H1 (cell line): ENCODE measurements at regions of chr1 and their contacts with region 1.

Region 1: GRCh38 chr1:41282679-41283317 is 40.7 kb upstream of the SCMH1 start:
- DNase-seq: peak; percentile 23 to 81
- H3K4me3 ChIP-seq: no peak overlapping the region
- H3K27ac ChIP-seq: no peak overlapping the region
- H3K4me1 ChIP-seq: peaks cover 8 to 15% (median 13%) of the 10 kb centered on the region in 4 experiments
- H3K27me3 ChIP-seq: no peaks in the 10 kb centered on the region; a peak in 2 of 7 replicates
- CTCF ChIP-seq: peak; percentile 78 to 94 (median 88)
- EP300 ChIP-seq: no peak
- POLR2A ChIP-seq: no peak
- RAD21 ChIP-seq: peak; percentile 83 to 84

Region 2: DNA sequence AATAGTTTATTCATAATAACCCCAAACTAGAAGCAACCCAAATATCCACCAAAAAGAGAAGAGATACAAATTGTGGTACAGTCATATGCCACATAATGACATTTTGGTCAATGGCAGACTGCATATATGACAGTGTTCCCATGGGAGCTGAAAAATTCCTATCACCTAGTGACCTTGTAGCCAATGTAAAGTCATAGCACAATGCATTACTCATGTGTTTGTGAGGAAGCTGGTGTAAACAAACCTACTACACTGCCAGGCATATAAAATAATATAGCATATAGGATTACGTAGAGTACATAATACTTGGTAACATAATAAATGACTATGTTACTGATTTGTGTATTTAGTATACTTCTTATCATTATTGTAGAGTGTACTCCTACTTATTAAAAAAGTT is 231.8 kb before region 1 on chr1:
- CTCF ChIA-PET with region 1: no interaction called
- POLR2A ChIA-PET with region 1: no interaction called
- DNase-seq: no peak
- H3K4me3 ChIP-seq: no peak overlapping the region
- H3K27ac ChIP-seq: no peak overlapping the region
- H3K4me1 ChIP-seq: no peaks in the 10 kb centered on the region
- H3K27me3 ChIP-seq: no peaks in the 10 kb centered on the region
- CTCF ChIP-seq: no peak
- EP300 ChIP-seq: no peak
- POLR2A ChIP-seq: no peak
- RAD21 ChIP-seq: no peak

Region 3: DNA sequence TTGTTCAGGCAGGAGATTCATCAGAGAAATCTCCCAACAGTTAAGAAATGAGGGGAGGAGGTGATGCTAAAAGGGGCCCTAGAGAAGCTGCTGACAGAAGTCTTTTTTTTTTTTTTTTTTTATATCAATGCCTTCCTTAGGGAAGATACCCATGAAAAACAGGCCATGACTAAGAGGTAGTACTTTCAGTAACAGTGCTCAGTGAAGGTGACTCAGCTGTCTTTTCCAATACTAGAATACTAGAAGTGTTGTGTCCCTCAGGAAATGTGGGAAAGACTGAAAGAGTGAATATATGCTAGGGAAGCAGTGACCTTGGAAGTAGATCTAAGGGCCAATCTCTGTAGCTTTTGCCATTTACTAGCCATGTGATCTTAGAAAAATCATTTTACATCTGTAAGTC is 208.8 kb before region 1 on chr1:
- CTCF ChIA-PET with region 1: no interaction called
- POLR2A ChIA-PET with region 1: no interaction called
- DNase-seq: no peak
- H3K4me3 ChIP-seq: no peak overlapping the region
- H3K27ac ChIP-seq: no peak overlapping the region
- H3K4me1 ChIP-seq: no peaks in the 10 kb centered on the region
- H3K27me3 ChIP-seq: no peaks in the 10 kb centered on the region
- CTCF ChIP-seq: no peak
- EP300 ChIP-seq: no peak
- POLR2A ChIP-seq: no peak
- RAD21 ChIP-seq: no peak

Region 4: DNA sequence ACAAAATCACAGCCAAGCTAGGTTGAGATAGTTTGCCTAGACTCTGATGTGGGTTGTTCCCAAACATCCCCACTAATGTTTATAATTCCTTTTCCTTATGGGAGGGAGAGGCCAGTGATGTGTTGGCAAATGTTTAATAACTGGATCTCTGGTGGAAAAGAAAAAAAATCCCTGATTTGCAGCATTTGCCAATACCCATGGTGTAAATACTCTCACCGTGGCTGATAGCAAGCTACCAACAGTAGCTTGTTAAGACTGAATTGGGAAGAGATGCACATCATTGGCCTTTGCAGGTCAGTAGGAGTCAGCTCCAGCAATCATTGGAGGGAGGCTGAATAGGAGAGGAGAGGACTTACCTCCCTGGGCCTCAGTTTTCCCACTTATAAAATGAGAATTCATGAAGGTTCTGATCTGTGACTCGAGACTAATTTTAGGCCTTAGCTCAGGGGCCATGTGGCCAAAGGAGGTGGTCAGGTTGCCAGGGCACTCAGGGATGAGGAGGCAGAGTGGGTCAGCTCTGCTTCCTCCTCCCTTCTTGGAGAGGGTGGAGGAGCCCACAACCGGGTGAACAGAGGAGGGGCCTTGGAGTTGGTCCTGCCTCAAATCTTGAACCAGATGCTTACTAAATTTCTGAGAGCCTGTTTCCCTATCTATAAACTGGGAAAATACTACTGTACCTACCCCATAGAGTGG is 20.7 kb before region 1 on chr1:
- CTCF ChIA-PET with region 1: interaction called, 23 read pairs
- POLR2A ChIA-PET with region 1: interaction called, 3 read pairs
- DNase-seq: no peak
- H3K4me3 ChIP-seq: no peak overlapping the region
- H3K27ac ChIP-seq: no peak overlapping the region
- H3K4me1 ChIP-seq: no peaks in the 10 kb centered on the region
- H3K27me3 ChIP-seq: no peaks in the 10 kb centered on the region
- CTCF ChIP-seq: no peak
- EP300 ChIP-seq: no peak
- POLR2A ChIP-seq: no peak
- RAD21 ChIP-seq: no peak

Region 5: GRCh38 chr1:41294216-41294615 is 11.4 kb after region 1 on chr1:
- CTCF ChIA-PET with region 1: interaction called, 43 read pairs
- POLR2A ChIA-PET with region 1: interaction called, 3 read pairs
- DNase-seq: no peak
- H3K4me3 ChIP-seq: no peak overlapping the region
- H3K27ac ChIP-seq: no peak overlapping the region
- H3K4me1 ChIP-seq: no peaks in the 10 kb centered on the region
- H3K27me3 ChIP-seq: peaks cover 0 to 2% (median 0%) of the 10 kb centered on the region in 4 experiments; a peak in 1 of 7 replicates
- CTCF ChIP-seq: no peak
- EP300 ChIP-seq: no peak
- POLR2A ChIP-seq: no peak
- RAD21 ChIP-seq: no peak

Region 6: DNA sequence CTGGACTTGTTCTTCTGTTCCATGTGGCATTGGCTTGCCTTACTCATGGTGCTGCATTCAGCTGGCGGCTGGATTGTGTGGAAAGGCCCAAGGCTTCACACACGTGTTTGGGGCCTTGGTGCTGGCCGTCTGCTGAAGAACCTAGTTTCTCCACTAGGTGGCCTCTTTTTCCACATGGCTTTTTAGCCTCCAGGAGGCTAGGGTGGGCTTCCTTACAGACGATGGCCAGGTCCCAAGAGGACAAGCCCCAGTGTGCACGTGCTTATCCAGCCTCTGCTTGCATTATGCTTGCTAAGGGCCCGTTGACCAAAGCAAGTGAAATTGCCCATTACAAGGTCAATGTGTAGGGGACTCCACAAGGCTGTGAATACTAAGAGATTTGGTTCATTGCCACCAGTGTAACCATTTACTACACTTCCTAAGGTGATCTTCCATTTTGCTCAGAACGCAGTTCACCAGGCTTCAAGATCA is 30.9 kb after region 1 on chr1:
- CTCF ChIA-PET with region 1: interaction called, 213 read pairs
- POLR2A ChIA-PET with region 1: no interaction called
- DNase-seq: peak; percentile 29 to 70
- H3K4me3 ChIP-seq: no peak overlapping the region
- H3K27ac ChIP-seq: no peak overlapping the region
- H3K4me1 ChIP-seq: peaks cover 0 to 14% (median 2%) of the 10 kb centered on the region in 4 experiments; a peak in 4 of 7 replicates
- H3K27me3 ChIP-seq: peaks cover 0 to 2% (median 0%) of the 10 kb centered on the region in 4 experiments; a peak in 1 of 7 replicates
- CTCF ChIP-seq: peak; percentile 64 to 87 (median 81)
- EP300 ChIP-seq: no peak
- POLR2A ChIP-seq: no peak
- RAD21 ChIP-seq: peak; percentile 55 to 73

Region 7: DNA sequence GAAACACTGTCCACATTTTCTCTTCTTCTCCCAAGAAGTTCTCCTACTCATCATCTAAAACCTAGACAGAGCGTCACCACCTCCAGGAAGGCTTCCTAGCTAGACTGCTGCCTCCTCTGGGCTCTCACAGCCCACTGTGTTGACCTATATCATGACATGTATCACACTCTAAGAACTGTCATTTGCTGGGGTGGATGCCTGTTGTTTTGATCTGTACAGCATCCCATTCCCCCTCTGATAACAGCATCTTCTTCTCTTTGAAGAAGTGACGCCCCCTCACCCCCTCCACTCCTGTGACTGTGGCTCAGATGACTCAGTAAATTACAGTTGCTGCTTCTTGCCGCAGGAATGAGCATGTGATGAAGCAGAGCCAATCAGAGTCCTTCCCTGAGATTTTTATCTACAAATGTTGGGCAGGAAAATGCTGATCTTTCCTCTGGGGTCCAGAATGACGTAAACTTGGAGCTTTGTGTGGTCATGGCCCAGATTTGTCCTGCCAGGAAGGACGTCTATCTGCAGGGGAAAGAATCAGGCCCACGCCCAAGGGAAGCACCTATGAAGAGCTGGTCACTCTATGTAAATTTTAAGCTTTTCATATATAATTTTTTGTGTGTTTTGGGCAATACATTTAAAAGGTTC is 50.5 kb after region 1 on chr1:
- CTCF ChIA-PET with region 1: interaction called, 21 read pairs
- POLR2A ChIA-PET with region 1: interaction called, 3 read pairs
- DNase-seq: peak in 1 of 2 experiments; percentile 23
- H3K4me3 ChIP-seq: no peak overlapping the region
- H3K27ac ChIP-seq: no peak overlapping the region
- H3K4me1 ChIP-seq: peaks cover 0 to 4% (median 4%) of the 10 kb centered on the region in 4 experiments; a peak in 5 of 7 replicates
- H3K27me3 ChIP-seq: no peaks in the 10 kb centered on the region
- CTCF ChIP-seq: no peak
- EP300 ChIP-seq: no peak
- POLR2A ChIP-seq: no peak
- RAD21 ChIP-seq: no peak

Region 8: GRCh38 chr1:41423511-41424221 is 140.9 kb after region 1 on chr1:
- CTCF ChIA-PET with region 1: interaction called, 121 read pairs
- POLR2A ChIA-PET with region 1: no interaction called
- DNase-seq: peak in 1 of 2 experiments; percentile 79
- H3K4me3 ChIP-seq: no peak overlapping the region
- H3K27ac ChIP-seq: no peak overlapping the region
- H3K4me1 ChIP-seq: peaks cover 0 to 7% (median 2%) of the 10 kb centered on the region in 4 experiments; a peak in 4 of 7 replicates
- H3K27me3 ChIP-seq: no peaks in the 10 kb centered on the region
- CTCF ChIP-seq: peak; percentile 62 to 89 (median 65)
- EP300 ChIP-seq: no peak
- POLR2A ChIP-seq: no peak
- RAD21 ChIP-seq: peak; percentile 58 to 72

Region 9: GRCh38 chr1:41474490-41475271 is 191.9 kb after region 1 on chr1:
- CTCF ChIA-PET with region 1: interaction called, 10 read pairs
- POLR2A ChIA-PET with region 1: no interaction called
- DNase-seq: no peak
- H3K4me3 ChIP-seq: no peak overlapping the region
- H3K27ac ChIP-seq: no peak overlapping the region
- H3K4me1 ChIP-seq: peaks cover 0 to 5% (median 4%) of the 10 kb centered on the region in 4 experiments; a peak in 2 of 7 replicates
- H3K27me3 ChIP-seq: no peaks in the 10 kb centered on the region
- CTCF ChIP-seq: no peak
- EP300 ChIP-seq: no peak
- POLR2A ChIP-seq: no peak
- RAD21 ChIP-seq: no peak